Breast epithelium (tissue), 4 donors: ENCODE measurements at regions of chr16 and their contacts with region 1.

Region 1: GRCh38 chr16:26111900-26112299 is 420.1 kb downstream of the HS3ST4 start:
- DNase-seq: no peak
- H3K4me3 ChIP-seq: no peak overlapping the region
- H3K27ac ChIP-seq: no peak overlapping the region
- H3K4me1 ChIP-seq: no peaks in the 10 kb centered on the region
- H3K27me3 ChIP-seq: no peaks in the 10 kb centered on the region
- CTCF ChIP-seq: no peak
- POLR2A ChIP-seq: no peak

Region 2: GRCh38 chr16:25941800-25942499 is 169.9 kb before region 1 on chr16:
- intact Hi-C with region 1: loop called (anchors 5 kb)
- DNase-seq: no peak
- H3K4me3 ChIP-seq: no peak overlapping the region
- H3K27ac ChIP-seq: no peak overlapping the region
- H3K4me1 ChIP-seq: no peaks in the 10 kb centered on the region
- H3K27me3 ChIP-seq: no peaks in the 10 kb centered on the region
- CTCF ChIP-seq: no peak
- POLR2A ChIP-seq: no peak

Region 3: DNA sequence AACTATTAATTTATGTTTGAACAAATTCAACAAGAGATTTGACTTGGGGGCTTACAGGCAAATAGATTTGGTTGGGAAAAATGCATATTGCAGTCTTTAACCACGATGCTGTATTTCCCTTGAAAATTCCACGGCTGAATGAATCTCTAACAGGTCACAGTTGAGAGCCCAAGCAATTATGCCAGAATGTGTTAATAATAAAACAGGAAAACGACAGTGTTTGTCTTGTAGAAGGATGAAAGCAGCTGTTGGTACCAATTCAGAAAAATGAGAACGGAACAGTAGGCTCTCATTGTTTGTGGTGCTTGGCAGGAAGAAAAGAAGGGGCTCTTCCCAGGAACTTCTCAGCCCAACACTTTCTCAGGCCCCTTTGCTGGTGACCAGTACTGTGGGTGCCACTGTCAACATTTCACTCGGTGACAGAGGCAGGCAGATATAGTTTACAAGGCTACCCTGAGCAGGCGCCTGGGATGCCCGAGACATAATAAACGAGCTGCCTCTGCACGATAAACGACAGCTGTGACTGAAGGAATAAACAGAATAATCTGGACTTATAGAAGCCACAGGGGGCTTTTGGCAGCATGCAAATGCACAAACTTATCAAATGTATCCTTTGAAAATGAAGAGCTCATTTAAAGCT is 33.1 kb before region 1 on chr16:
- intact Hi-C with region 1: loop called (anchors 2 kb)
- DNase-seq: no peak
- H3K4me3 ChIP-seq: no peak overlapping the region
- H3K27ac ChIP-seq: no peak overlapping the region
- H3K4me1 ChIP-seq: no peaks in the 10 kb centered on the region
- H3K27me3 ChIP-seq: no peaks in the 10 kb centered on the region
- CTCF ChIP-seq: no peak
- POLR2A ChIP-seq: no peak